Activated T-helper 2 cell treated with anti-CD3 and anti-CD28 coated beads, Interferon-gamma antibody, Interleukin-2, Interleukin-4, amounts not matched to agents 10 μg/mL and 5 μg/mL and 100 μg/mL, durations not matched to agents 14 hours and 24 hours and 36 hours (primary cell): ENCODE measurements at regions of chr16 and their contacts with region 1.

Region 1: DNA sequence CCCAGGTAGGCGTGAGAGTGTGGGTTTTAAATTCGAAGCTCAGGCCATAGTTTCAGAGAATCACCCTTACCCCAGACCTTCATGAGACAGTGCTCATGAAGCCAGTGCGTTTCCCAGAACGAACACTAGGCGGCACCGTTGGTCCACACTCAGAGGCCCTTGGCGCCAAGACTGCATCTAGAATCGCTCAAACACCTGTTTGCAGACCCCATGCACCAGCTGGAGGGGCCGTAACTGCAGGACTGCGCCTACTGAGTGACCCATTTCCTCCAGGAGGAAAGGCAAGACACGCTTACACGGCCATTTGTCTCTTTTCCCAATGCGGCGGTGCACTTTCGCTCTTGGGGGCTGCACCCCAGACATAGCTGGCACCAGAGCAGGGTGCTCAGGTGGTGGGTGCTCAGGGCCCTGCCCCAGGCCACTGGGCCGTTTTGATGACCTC is 34.0 kb downstream of the ADGRG5 start:
- DNase-seq: peak; percentile 69
- H3K4me3 Mint-ChIP-seq: no peak overlapping the region
- H3K27ac Mint-ChIP-seq: peak overlapping the region; percentile 25
- H3K4me1 Mint-ChIP-seq: peaks cover 47% of the 10 kb centered on the region
- H3K27me3 Mint-ChIP-seq: peaks cover 2% of the 10 kb centered on the region

Region 2: DNA sequence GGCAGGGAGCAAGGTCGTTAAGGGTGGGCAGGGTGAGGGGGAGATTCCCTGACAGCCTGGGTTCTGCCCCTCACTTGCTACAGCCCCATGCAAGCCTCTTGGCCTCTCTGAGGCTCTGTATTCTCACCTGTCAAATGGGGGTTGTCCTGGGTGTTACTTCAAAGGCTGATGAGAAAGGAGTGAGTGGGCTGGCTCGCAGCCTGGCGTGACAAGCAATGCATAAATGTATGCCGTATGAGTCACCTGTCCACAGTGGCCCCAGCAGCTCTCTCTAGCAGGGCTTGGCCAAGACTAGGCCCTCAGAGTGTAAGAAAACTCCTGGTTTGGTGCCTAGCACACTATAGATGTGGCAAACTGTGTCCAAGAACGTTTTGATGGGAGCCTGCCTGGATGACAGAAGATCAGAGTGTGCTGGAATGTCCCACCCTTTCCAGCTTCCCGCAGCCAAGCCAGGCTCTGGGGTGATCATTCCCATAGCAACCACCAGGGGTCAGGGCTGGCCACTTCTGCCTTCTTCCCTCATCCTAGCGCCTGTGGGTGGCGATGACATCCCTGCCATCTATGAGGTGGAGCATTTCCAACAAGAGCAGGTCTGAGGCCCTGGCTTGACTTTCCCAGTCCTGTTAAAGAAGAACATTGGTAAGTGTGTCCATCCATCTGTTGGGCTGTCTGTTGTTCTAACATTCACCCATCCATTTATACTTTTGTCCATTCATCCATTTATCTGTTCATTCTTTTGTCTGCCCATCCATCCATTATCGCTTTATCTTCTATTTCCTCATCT is 14.8 kb after region 1 on chr16:
- intact Hi-C with region 1: loop called (anchors 1 kb)
- DNase-seq: peak; percentile 58
- H3K4me3 Mint-ChIP-seq: peak overlapping the region; percentile 32
- H3K27ac Mint-ChIP-seq: peak overlapping the region; percentile 90
- H3K4me1 Mint-ChIP-seq: peaks cover 42% of the 10 kb centered on the region
- H3K27me3 Mint-ChIP-seq: no peaks in the 10 kb centered on the region

Region 3: GRCh38 chr16:57601801-57602478 is 25.5 kb after region 1 on chr16:
- intact Hi-C with region 1: no loop called
- DNase-seq: peak; percentile 79
- H3K4me3 Mint-ChIP-seq: peak overlapping the region; percentile 27
- H3K27ac Mint-ChIP-seq: peak overlapping the region; percentile 90
- H3K4me1 Mint-ChIP-seq: peaks cover 48% of the 10 kb centered on the region
- H3K27me3 Mint-ChIP-seq: peaks cover 7% of the 10 kb centered on the region

Region 4: GRCh38 chr16:57648590-57649442 is 72.4 kb after region 1 on chr16:
- intact Hi-C with region 1: loop called (anchors 1 kb)
- DNase-seq: peak; percentile 80
- H3K4me3 Mint-ChIP-seq: no peak overlapping the region
- H3K27ac Mint-ChIP-seq: peak overlapping the region; percentile 48
- H3K4me1 Mint-ChIP-seq: peaks cover 23% of the 10 kb centered on the region
- H3K27me3 Mint-ChIP-seq: peaks cover 2% of the 10 kb centered on the region

Region 5: GRCh38 chr16:57734925-57735754 is 158.7 kb after region 1 on chr16:
- intact Hi-C with region 1: loop called (anchors 1 kb)
- DNase-seq: peak; percentile 98
- H3K4me3 Mint-ChIP-seq: peak overlapping the region; percentile 97
- H3K27ac Mint-ChIP-seq: peak overlapping the region; percentile 96
- H3K4me1 Mint-ChIP-seq: peaks cover 15% of the 10 kb centered on the region
- H3K27me3 Mint-ChIP-seq: no peaks in the 10 kb centered on the region

Region 6: DNA sequence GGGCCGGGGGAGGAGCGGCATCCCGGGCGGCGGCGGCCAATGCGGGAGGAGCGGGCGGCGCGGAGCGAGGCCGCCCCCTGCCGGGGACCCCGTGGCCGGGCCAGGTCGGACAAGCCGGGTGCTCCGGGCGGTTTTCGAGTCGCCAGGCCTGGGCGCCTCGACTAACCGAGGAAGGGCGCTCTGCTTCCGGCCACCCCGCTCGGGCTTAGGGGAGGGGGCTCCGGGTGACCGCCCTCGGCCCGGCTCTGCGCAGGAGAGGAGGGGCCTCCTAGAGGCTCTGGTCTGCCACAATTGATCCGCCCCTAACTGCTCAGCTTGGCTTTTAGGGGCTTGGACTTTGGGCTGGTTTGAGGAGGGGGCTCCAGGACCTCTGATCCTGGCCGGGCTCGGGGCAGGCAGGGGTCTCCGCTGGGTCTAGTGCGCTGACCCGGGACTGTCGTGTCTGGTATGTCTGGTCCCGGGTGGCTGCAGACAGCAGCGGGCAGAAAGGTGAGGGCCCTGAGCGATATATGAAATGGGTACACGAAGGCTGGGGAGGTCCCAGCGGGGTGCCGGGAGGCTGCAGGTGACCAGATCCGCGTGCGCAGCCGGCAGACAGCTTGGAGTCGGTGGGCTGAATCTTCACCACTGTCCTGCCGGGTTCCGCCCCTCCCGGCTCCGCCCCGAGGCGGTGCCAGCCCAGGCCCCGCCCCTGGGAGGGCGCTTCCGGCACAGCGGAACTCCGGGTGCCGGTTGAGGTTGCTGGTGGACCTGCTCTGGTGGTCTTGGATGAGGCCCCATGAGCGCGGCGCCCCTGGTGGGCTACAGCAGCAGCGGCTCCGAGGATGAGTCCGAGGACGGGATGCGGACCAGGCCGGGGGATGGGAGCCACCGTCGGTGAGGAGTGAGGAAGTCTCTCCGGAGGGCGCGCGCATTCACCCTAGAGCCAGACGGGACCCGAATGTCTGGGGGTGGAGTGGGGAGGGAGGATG is 424.5 kb after region 1 on chr16 and contains the start of gene USB1:
- intact Hi-C with region 1: loop called (anchors 2 kb)
- DNase-seq: peak; percentile 83
- H3K4me3 Mint-ChIP-seq: peak within 1 kb of the TSS; percentile 92
- H3K27ac Mint-ChIP-seq: peak within 1 kb of the TSS; percentile 90
- H3K4me1 Mint-ChIP-seq: peaks cover 35% of the 10 kb centered on the region
- H3K27me3 Mint-ChIP-seq: no peaks in the 10 kb centered on the region
- total RNA-seq, gene USB1: 51.6 and 57.8 TPM in 2 replicates